H1 (cell line): ENCODE measurements at regions of chr14 and their contacts with region 1.

Region 1: DNA sequence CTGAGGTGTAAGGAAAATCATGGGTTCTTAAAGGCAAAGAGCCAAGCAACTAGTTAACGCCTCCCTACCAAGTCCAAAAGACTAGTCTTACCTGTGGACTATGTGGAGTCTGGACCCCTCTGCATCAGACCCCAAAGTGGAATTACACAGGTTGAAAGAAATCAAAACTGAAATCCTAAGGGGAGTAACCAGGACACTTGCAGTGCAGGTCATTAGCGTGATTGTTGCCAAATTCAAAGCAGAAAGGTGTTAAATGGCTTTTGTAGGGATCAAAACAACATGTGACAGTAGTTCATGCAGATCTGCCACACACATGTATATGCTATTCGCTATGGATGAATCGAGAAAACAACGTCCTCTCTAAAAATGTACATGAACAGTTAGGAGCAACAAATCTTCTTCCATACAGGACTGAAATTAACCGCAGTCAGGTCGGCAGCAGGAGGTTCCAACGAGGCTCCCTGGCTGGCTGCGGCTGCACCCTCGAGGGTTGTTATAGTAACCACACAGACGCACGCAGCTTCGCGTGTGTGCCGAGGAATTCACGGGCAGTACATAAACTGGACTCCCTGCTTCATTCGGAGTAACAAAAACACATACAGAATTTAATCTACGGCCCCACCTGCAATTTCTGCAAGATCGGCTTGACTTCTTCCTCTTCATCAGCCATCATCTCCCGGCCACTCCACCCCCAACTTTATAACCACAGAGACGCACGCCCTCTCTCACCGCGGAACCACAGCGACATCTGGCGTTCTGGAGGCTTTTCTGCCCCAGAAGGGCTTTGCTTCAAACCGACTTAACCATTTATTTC is at the start of gene TTC5:
- DNase-seq: peak; percentile 53 to 95
- H3K4me3 ChIP-seq: peak within 1 kb of the TSS; percentile 78 to 95 (median 86)
- H3K27ac ChIP-seq: no peak within 1 kb of the TSS
- H3K4me1 ChIP-seq: no peaks in the 10 kb centered on the region
- H3K27me3 ChIP-seq: no peaks in the 10 kb centered on the region
- CTCF ChIP-seq: peak; percentile 80 to 91 (median 84)
- EP300 ChIP-seq: no peak
- POLR2A ChIP-seq: peak in 1 of 2 experiments; percentile 58; a peak in 1 of 3 replicates
- RAD21 ChIP-seq: peak; percentile 35 to 52
- total RNA-seq, gene TTC5: 18.0 and 20.7 TPM in 2 replicates

Region 2: DNA sequence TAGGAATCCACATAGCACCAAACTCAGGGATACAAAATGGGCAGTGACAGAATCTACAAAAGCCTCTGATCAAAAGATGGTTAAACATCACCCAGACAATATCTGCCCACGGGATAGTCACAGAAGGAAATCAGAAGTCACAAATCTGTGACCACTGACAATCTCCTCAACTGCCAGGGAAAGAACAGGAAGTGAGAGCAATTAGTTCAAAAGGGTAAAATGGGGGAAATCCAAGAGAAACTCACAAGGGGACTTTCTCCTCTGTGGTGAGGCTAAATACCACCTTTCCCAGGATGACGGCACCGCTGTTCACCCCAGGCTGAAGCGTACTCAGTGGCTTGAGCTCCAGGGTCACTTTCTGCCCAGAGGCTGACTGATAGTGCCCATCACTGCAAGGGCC is 10.4 kb before region 1 on chr14:
- CTCF ChIA-PET with region 1: interaction called, 10 read pairs
- POLR2A ChIA-PET with region 1: interaction called, 3 read pairs
- DNase-seq: no peak
- H3K4me3 ChIP-seq: no peak overlapping the region
- H3K27ac ChIP-seq: no peak overlapping the region
- H3K4me1 ChIP-seq: no peaks in the 10 kb centered on the region
- H3K27me3 ChIP-seq: no peaks in the 10 kb centered on the region
- CTCF ChIP-seq: no peak
- EP300 ChIP-seq: no peak
- POLR2A ChIP-seq: no peak
- RAD21 ChIP-seq: no peak

Region 3: DNA sequence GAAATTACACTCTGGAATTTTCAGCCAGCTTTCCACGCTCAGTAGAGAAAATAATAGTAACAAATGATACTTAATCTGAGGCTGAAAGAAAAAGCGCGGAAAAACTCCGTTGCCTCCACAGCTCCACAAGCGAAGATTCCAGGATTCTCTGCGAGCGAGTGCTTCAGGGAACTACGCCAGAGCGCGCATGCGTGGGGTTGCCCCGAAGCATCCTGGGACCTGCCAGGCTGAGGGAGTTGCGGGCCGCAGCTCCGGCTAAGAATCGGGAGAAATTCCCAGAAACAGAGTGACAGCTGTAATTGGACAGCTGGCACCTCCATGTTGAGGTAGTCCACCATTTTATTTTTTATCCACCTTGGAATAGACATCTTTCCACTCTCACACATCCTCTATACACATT is 12.2 kb after region 1 on chr14:
- CTCF ChIA-PET with region 1: interaction called, 8 read pairs
- POLR2A ChIA-PET with region 1: interaction called, 10 read pairs
- DNase-seq: no peak
- H3K4me3 ChIP-seq: no peak overlapping the region
- H3K27ac ChIP-seq: no peak overlapping the region
- H3K4me1 ChIP-seq: no peaks in the 10 kb centered on the region
- H3K27me3 ChIP-seq: no peaks in the 10 kb centered on the region; a peak in 1 of 7 replicates
- CTCF ChIP-seq: no peak
- EP300 ChIP-seq: no peak
- POLR2A ChIP-seq: peak; percentile 38 to 61
- RAD21 ChIP-seq: no peak

Region 4: GRCh38 chr14:20391505-20391904 is 86.0 kb after region 1 on chr14:
- CTCF ChIA-PET with region 1: no interaction called
- POLR2A ChIA-PET with region 1: no interaction called
- DNase-seq: no peak
- H3K4me3 ChIP-seq: no peak overlapping the region
- H3K27ac ChIP-seq: no peak overlapping the region
- H3K4me1 ChIP-seq: no peaks in the 10 kb centered on the region
- H3K27me3 ChIP-seq: no peaks in the 10 kb centered on the region
- CTCF ChIP-seq: no peak
- EP300 ChIP-seq: no peak
- POLR2A ChIP-seq: no peak
- RAD21 ChIP-seq: no peak

Region 5: GRCh38 chr14:20413045-20413799 is 107.8 kb after region 1 on chr14 and contains the start of gene TEP1:
- CTCF ChIA-PET with region 1: no interaction called
- POLR2A ChIA-PET with region 1: no interaction called
- DNase-seq: peak; percentile 31 to 83
- H3K4me3 ChIP-seq: peak within 1 kb of the TSS; percentile 91 to 97 (median 92)
- H3K27ac ChIP-seq: no peak within 1 kb of the TSS; the same call in 1 of the 2 replicates
- H3K4me1 ChIP-seq: peaks cover 0 to 5% (median 3%) of the 10 kb centered on the region in 4 experiments; a peak in 3 of 7 replicates
- H3K27me3 ChIP-seq: no peaks in the 10 kb centered on the region
- CTCF ChIP-seq: no peak
- EP300 ChIP-seq: no peak
- POLR2A ChIP-seq: peak in 1 of 2 experiments; percentile 57; a peak in 1 of 3 replicates
- RAD21 ChIP-seq: no peak
- total RNA-seq, gene TEP1: 9.6 and 10.7 TPM in 2 replicates